Caco-2 (cell line): ENCODE measurements at regions of chr18 and their contacts with region 1.

Region 1: DNA sequence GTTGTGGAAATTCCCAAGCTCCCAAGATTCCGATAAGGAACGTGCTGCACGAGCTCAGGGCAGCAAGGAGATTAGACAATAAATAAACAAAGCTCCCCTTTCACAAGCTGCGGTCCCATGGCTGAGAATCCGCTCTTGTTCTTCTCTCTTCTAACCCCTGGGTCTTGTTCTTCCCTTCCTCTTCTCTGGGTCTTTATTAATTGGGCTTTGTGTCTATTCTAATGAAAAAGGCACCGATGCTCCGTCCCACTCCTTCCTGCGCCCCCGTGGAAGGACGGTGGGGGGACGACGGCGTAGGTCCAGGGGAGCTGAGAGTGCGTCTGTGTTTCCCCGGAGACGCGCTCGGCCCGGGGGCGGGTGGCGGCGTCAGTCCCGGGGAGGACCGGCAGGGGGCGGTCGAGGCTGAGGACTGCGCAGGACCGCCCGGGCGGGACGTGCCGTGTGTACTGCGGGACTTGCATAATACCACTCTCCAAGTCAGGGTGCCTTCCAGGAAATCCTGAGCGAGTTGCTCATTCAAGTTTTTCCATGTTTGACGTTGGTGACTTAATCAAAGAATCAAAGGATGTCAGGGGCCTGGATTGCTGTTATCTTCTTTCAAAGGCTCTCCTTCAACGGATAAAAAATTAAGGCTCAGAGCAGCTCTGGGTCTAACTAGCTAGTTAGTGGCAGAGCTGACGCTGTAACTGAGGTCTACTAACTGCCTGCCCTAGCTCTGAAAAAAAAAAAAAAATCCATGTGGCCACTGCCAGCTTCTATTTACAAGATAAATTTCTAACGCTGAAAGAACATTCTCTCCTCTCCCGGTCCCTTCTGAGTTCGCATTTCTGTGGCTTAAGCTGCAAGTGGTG is 321.4 kb downstream of the TGIF1 start:
- DNase-seq: peak; percentile 77 to 93
- H3K4me3 ChIP-seq: peak overlapping the region; percentile 30
- H3K4me3 Mint-ChIP-seq: peak overlapping the region; percentile 65
- H3K27ac Mint-ChIP-seq: no peak overlapping the region
- H3K4me1 ChIP-seq: peaks cover 25% of the 10 kb centered on the region
- H3K4me1 Mint-ChIP-seq: peaks cover 17% of the 10 kb centered on the region
- H3K27me3 ChIP-seq: no peaks in the 10 kb centered on the region
- H3K27me3 Mint-ChIP-seq: no peaks in the 10 kb centered on the region
- CTCF ChIP-seq: peak; percentile 91 to 92

Region 2: DNA sequence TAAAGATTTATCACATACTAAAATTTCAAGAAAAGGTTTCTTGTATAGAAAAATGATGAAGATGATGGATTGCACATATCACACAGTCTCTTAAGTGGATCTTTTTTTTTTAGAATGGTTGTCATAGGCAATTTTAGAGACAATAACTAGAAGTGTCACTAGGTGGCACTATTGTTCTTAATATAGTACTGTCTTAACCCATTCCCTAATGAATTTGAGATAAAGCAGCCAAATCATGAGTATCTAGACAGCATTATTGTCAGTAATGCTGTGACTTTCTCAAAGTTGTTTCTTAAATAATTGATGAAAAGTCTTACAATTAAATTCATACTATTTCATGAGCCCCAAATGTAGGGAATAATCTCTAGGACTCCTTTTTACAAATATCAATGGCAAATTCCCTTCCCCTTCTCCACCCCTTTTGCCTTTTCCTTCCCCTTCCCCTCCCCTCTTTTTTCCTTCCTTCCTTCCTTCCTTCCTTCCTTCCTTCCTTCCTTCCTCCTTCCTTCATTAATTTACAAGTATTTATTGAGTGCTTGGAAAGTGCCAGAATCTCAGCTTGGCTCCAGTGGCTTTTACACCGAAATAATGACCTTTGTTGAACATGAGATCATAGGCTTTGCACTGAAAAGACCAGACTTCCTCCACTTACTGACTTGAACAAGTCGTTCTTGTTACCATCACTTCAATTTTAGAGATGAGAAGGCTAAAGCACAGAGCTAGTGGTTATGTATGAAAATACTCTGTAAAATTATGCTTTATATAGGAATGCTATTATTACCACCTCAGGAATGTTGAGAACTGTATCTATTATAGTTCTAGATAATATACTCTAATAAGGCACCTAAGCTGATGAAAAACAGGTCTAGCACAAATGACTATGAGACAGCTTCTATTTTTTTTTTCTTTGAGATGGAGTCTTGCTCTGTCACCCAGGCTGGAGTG is 489.6 kb before region 1 on chr18:
- CTCF ChIA-PET with region 1: no interaction called
- POLR2A ChIA-PET with region 1: no interaction called
- intact Hi-C with region 1: loop called (anchors 2 kb)
- DNase-seq: peak in 1 of 2 experiments; percentile 78
- H3K4me3 ChIP-seq: no peak overlapping the region
- H3K4me3 Mint-ChIP-seq: no peak overlapping the region
- H3K27ac Mint-ChIP-seq: no peak overlapping the region
- H3K4me1 ChIP-seq: no peaks in the 10 kb centered on the region
- H3K4me1 Mint-ChIP-seq: peaks cover 13% of the 10 kb centered on the region
- H3K27me3 ChIP-seq: no peaks in the 10 kb centered on the region
- H3K27me3 Mint-ChIP-seq: no peaks in the 10 kb centered on the region
- CTCF ChIP-seq: peak; percentile 33 to 66

Region 3: GRCh38 chr18:3720826-3721545 is 50.4 kb before region 1 on chr18:
- CTCF ChIA-PET with region 1: interaction called, 6 read pairs
- POLR2A ChIA-PET with region 1: no interaction called
- intact Hi-C with region 1: loop called (anchors 1 kb)
- DNase-seq: peak; percentile 50 to 68
- H3K4me3 ChIP-seq: no peak overlapping the region
- H3K4me3 Mint-ChIP-seq: peak overlapping the region; percentile 30
- H3K27ac Mint-ChIP-seq: no peak overlapping the region
- H3K4me1 ChIP-seq: peaks cover 44% of the 10 kb centered on the region
- H3K4me1 Mint-ChIP-seq: peaks cover 32% of the 10 kb centered on the region
- H3K27me3 ChIP-seq: no peaks in the 10 kb centered on the region
- H3K27me3 Mint-ChIP-seq: no peaks in the 10 kb centered on the region
- CTCF ChIP-seq: no peak

Region 4: DNA sequence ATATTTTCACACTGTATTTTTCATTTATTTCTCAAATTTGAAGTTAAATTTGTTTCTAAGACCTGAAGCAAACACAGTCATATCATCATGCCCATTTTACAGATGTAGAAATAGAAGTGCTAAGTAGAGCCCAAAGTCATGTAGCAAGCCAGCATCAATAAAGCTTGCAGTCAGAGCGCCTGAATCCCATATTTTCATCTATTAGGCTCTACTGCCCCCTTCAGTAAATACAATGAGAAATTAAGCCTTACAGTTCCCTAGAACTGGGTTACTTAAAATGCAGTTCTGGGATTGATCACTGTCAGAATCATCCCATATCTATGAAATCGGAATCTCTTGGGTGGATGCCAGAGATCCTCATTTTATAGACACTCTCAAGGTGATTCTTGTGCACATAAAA is 98.5 kb after region 1 on chr18:
- CTCF ChIA-PET with region 1: interaction called, 35 read pairs
- POLR2A ChIA-PET with region 1: no interaction called
- intact Hi-C with region 1: loop called (anchors 1 kb)
- DNase-seq: peak in 1 of 2 experiments; percentile 46
- H3K4me3 ChIP-seq: no peak overlapping the region
- H3K4me3 Mint-ChIP-seq: no peak overlapping the region
- H3K27ac Mint-ChIP-seq: no peak overlapping the region
- H3K4me1 ChIP-seq: no peaks in the 10 kb centered on the region
- H3K4me1 Mint-ChIP-seq: peaks cover 7% of the 10 kb centered on the region
- H3K27me3 ChIP-seq: no peaks in the 10 kb centered on the region; the same call in 1 of the 2 replicates
- H3K27me3 Mint-ChIP-seq: peaks cover 27% of the 10 kb centered on the region
- CTCF ChIP-seq: peak; percentile 42 to 49

Region 5: DNA sequence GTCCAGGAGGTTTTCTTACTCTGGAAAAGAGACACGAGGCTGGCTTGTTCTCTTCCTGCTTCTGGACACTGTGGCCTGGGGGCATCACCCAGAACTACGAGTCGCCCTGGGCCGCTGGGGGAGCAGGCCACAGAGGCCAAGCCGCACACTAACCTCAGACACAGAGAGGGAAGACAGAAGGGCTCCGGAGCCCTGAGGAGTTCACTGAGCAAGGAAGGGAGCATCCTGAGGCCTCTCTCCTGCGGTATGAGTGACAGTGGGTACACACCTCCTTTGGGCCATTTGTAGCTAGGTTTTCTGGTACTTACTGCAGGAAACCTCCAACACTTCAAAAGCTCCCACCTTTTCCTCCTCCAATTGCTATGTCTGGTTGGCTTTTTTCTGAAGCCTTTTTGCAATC is 189.6 kb after region 1 on chr18:
- CTCF ChIA-PET with region 1: no interaction called
- POLR2A ChIA-PET with region 1: no interaction called
- intact Hi-C with region 1: no loop called
- DNase-seq: no peak
- H3K4me3 ChIP-seq: no peak overlapping the region
- H3K4me3 Mint-ChIP-seq: no peak overlapping the region
- H3K27ac Mint-ChIP-seq: no peak overlapping the region
- H3K4me1 ChIP-seq: no peaks in the 10 kb centered on the region
- H3K4me1 Mint-ChIP-seq: no peaks in the 10 kb centered on the region
- H3K27me3 ChIP-seq: no peaks in the 10 kb centered on the region
- H3K27me3 Mint-ChIP-seq: no peaks in the 10 kb centered on the region
- CTCF ChIP-seq: no peak

Region 6: GRCh38 chr18:3995476-3996102 is 224.2 kb after region 1 on chr18:
- CTCF ChIA-PET with region 1: interaction called, 17 read pairs
- POLR2A ChIA-PET with region 1: no interaction called
- intact Hi-C with region 1: loop called (anchors 1 kb)
- DNase-seq: peak; percentile 47 to 71
- H3K4me3 ChIP-seq: no peak overlapping the region
- H3K4me3 Mint-ChIP-seq: no peak overlapping the region
- H3K27ac Mint-ChIP-seq: no peak overlapping the region
- H3K4me1 ChIP-seq: no peaks in the 10 kb centered on the region
- H3K4me1 Mint-ChIP-seq: no peaks in the 10 kb centered on the region
- H3K27me3 ChIP-seq: no peaks in the 10 kb centered on the region
- H3K27me3 Mint-ChIP-seq: no peaks in the 10 kb centered on the region
- CTCF ChIP-seq: peak; percentile 69 to 87